AG04449 (cell line): ENCODE measurements at regions of chr12 and their contacts with region 1.

Region 1: GRCh38 chr12:92784795-92785562 is 82.2 kb downstream of the PLEKHG7 start:
- DNase-seq: peak; percentile 23
- H3K4me3 ChIP-seq: no peak overlapping the region
- CTCF ChIP-seq: peak; percentile 46

Region 2: DNA sequence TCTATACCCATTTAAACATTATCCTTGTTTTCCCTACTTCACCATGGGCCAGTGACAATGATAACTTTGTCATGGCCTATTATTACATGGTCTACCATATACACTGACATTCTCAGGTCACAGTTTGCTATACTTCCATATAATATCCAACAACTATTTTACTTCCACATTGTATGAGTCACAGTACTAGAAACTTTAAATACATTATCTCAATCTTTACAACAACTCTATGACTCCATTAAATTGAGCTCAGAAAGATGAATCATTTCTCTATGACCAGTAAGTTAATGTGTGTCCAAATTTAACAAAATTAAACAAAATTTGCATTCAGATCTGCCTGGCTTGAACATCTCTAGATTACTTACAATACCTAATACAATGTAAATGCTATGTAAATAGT is 11.7 kb after region 1 on chr12:
- CTCF ChIA-PET with region 1: interaction called, 12 read pairs
- POLR2A ChIA-PET with region 1: no interaction called
- DNase-seq: no peak
- H3K4me3 ChIP-seq: no peak overlapping the region
- CTCF ChIP-seq: no peak

Region 3: GRCh38 chr12:92886131-92886530 is 101.2 kb after region 1 on chr12:
- CTCF ChIA-PET with region 1: no interaction called
- POLR2A ChIA-PET with region 1: no interaction called
- DNase-seq: no peak
- H3K4me3 ChIP-seq: no peak overlapping the region
- CTCF ChIP-seq: no peak